ENCODE measurements at regions of chr9 and their contacts with region 1.

Region 1: DNA sequence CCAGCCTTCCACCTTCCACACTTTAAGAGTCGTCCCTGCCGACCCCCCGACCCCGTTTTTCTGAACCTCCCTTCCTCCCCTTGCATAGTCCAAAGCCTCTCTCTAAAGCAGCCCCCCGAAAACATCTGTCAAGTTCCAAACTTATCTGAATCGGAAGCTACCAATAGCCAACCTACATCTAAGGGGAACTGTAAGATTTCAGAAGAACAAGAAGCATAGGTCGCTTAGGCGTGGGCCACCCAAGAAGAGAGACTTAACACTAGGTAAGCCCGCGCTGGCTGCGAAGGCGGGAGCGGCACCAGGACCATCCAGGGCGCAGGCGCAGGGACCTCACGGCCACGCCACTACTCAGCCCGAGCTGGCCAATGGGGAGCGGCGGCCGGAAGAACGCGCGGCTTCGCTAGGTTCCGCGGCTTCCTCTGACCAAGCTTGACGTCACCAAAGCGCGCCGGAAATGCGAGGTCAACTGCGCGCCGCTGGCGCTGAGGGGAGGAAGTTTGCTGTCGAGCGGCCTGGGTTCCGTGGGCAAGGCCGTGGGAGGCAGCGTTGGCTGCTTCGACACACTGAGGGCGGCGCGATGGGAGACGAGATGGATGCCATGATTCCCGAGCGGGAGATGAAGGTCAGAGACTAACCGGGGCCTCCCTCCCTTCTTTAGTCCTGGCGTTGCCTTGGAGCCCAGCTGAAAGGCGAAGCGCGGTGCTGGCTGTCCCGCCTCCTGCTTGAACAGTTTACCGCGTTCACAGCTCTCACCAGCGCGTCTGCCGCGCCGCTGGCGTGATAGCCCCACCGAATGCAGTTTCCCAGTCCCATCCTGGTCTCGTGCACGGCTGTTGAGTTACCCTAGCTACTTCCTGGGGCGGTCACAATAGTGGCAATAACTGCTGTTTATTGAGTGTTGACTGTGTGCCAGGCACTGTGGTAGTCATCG is at the start of gene NUP214:
- DNase-seq: peak; percentile 98 to 99 (median 99)
- H3K4me3 ChIP-seq: peak within 1 kb of the TSS; percentile 70 to 97 (median 70)
- H3K4me3 Mint-ChIP-seq: peak within 1 kb of the TSS; percentile 96 to 97
- H3K27ac ChIP-seq: peak within 1 kb of the TSS; percentile 75 to 97
- H3K27ac Mint-ChIP-seq: peak within 1 kb of the TSS; percentile 95 to 98 (median 96)
- H3K4me1 ChIP-seq: peaks cover 12 to 19% of the 10 kb centered on the region in 2 donors
- H3K4me1 Mint-ChIP-seq: peaks cover 13% of the 10 kb centered on the region
- H3K27me3 ChIP-seq: no peaks in the 10 kb centered on the region
- H3K27me3 Mint-ChIP-seq: peaks cover 1 to 2% (median 2%) of the 10 kb centered on the region in 3 donors
- CTCF ChIP-seq: no peak
- polyA plus RNA-seq, gene NUP214: 94.9 to 329 (median 214) TPM

Region 2: GRCh38 chr9:130693426-130694191 is 431.8 kb before region 1 on chr9 and contains the start of gene EXOSC2:
- intact Hi-C with region 1: loop called in 1 of 2 experiments (anchors 5 kb)
- DNase-seq: peak; percentile 96 to 98 (median 97)
- H3K4me3 ChIP-seq: peak within 1 kb of the TSS; percentile 66 to 90 (median 81)
- H3K4me3 Mint-ChIP-seq: peak within 1 kb of the TSS; percentile 93 to 98
- H3K27ac ChIP-seq: peak within 1 kb of the TSS; percentile 23 to 81
- H3K27ac Mint-ChIP-seq: peak within 1 kb of the TSS; percentile 80 to 94 (median 87)
- H3K4me1 ChIP-seq: peaks cover 20 to 22% of the 10 kb centered on the region in 2 donors
- H3K4me1 Mint-ChIP-seq: peaks cover 34% of the 10 kb centered on the region
- H3K27me3 ChIP-seq: peaks cover 0 to 7% of the 10 kb centered on the region in 2 donors
- H3K27me3 Mint-ChIP-seq: peaks cover 7 to 12% (median 11%) of the 10 kb centered on the region in 3 donors
- CTCF ChIP-seq: no peak
- polyA plus RNA-seq, gene EXOSC2: 10.2 to 15.8 (median 11.2) TPM

Region 3: GRCh38 chr9:132169672-132170392 is 1044.4 kb after region 1 on chr9:
- intact Hi-C with region 1: no loop called
- DNase-seq: peak; percentile 53 to 64 (median 62)
- H3K4me3 ChIP-seq: no peak overlapping the region
- H3K4me3 Mint-ChIP-seq: no peak overlapping the region
- H3K27ac ChIP-seq: no peak overlapping the region
- H3K27ac Mint-ChIP-seq: no peak overlapping the region
- H3K4me1 ChIP-seq: no peaks in the 10 kb centered on the region
- H3K4me1 Mint-ChIP-seq: peaks cover under 1% of the 10 kb centered on the region
- H3K27me3 ChIP-seq: peaks cover 16 to 28% of the 10 kb centered on the region in 2 donors
- H3K27me3 Mint-ChIP-seq: peaks cover 31 to 44% (median 35%) of the 10 kb centered on the region in 3 donors
- CTCF ChIP-seq: peak; percentile 97

Measured in CD14-positive monocyte (primary cell).